Dendritic cell treated with granulocyte-macrophage colony-stimulating factor and Interleukin-4, amounts not matched to agents 40 ng/mL and 50 ng/mL, for 4 days (primary cell): ENCODE measurements at regions of chr17 and their contacts with region 1.

Region 1: GRCh38 chr17:28335201-28335955 is at the starts of genes IFT20 and TNFAIP1:
- H3K4me3 Mint-ChIP-seq: peak within 1 kb of the TSS; percentile 98
- H3K27ac Mint-ChIP-seq: peak within 1 kb of the TSS; percentile 76
- H3K4me1 Mint-ChIP-seq: peaks cover 54% of the 10 kb centered on the region
- H3K27me3 Mint-ChIP-seq: no peaks in the 10 kb centered on the region

Region 2: GRCh38 chr17:28086519-28086918 is 248.9 kb before region 1 on chr17:
- intact Hi-C with region 1: no loop called
- H3K4me3 Mint-ChIP-seq: no peak overlapping the region
- H3K27ac Mint-ChIP-seq: no peak overlapping the region
- H3K4me1 Mint-ChIP-seq: peaks cover 23% of the 10 kb centered on the region
- H3K27me3 Mint-ChIP-seq: no peaks in the 10 kb centered on the region

Region 3: GRCh38 chr17:28193241-28193640 is 142.1 kb before region 1 on chr17:
- intact Hi-C with region 1: no loop called
- H3K4me3 Mint-ChIP-seq: no peak overlapping the region
- H3K27ac Mint-ChIP-seq: peak overlapping the region; percentile 79
- H3K4me1 Mint-ChIP-seq: peaks cover 44% of the 10 kb centered on the region
- H3K27me3 Mint-ChIP-seq: no peaks in the 10 kb centered on the region

Region 4: DNA sequence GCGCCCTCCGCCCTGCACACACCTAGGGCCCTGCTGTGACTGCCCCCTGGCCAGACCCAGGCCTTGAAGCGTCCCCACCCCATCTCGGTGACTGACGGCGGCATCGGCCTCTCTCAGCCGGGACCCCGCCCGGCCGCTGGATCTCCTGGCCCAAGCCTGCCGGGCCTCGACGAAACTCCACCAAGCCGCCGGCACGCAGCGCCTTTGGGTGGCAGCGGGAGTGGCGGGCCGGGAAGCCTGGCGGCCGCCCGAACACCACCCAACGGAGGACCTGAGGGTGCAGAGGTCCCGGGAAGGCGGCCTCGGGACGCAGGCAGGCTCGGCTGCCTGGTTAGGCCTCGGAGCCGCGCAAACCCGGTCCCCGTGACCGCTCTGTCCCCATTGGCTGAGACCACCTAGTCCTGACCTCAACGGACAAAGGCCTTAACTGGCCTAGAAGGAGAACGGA is 28.4 kb before region 1 on chr17:
- intact Hi-C with region 1: no loop called
- H3K4me3 Mint-ChIP-seq: no peak overlapping the region
- H3K27ac Mint-ChIP-seq: no peak overlapping the region
- H3K4me1 Mint-ChIP-seq: no peaks in the 10 kb centered on the region
- H3K27me3 Mint-ChIP-seq: peaks cover 48% of the 10 kb centered on the region

Region 5: DNA sequence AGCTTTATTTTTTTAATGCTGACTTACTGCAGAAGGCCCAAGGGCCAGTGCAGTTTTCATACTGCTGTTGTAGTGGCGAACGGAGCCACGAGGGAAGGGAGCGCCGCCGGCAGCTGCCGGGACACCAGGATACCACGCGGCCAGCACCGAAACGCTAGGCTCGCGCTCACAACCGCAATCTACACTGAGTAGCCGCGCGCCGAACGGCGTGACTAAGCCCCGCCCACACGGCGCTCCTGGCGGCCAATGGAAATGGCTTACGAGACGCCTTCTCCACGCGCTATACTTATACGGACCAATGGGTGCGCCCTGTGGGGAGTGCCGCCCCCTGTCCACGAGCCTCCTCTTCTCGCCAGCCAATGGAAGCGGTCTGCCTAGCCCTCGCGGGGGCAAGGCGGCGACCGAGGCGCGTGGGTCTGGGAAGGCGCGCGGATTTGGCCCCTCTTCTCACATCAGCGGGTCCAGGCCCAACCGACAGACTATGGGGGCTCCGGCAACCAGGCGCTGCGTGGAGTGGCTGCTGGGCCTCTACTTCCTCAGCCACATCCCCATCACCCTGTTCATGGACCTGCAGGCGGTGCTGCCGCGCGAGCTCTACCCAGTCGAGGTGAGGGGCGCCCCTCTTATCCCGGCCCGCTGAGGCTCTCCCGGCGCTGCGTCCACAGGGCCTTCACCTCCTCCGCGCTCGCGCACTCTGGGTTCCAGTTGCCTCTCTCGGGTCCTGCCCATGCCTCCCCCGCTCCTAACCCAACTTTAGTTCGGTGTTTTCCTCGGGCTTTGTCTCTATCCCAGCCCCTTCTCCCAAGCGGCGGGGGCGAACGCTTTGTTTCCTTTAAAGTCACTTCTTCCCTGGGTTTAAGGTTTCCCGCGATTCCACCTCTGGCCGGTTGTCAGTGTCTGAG is 16.4 kb before region 1 on chr17 and contains the start of gene TMEM97:
- intact Hi-C with region 1: loop called (anchors 1 kb)
- H3K4me3 Mint-ChIP-seq: peak within 1 kb of the TSS; percentile 96
- H3K27ac Mint-ChIP-seq: peak within 1 kb of the TSS; percentile 83
- H3K4me1 Mint-ChIP-seq: peaks cover 22% of the 10 kb centered on the region
- H3K27me3 Mint-ChIP-seq: peaks cover 23% of the 10 kb centered on the region

Region 6: DNA sequence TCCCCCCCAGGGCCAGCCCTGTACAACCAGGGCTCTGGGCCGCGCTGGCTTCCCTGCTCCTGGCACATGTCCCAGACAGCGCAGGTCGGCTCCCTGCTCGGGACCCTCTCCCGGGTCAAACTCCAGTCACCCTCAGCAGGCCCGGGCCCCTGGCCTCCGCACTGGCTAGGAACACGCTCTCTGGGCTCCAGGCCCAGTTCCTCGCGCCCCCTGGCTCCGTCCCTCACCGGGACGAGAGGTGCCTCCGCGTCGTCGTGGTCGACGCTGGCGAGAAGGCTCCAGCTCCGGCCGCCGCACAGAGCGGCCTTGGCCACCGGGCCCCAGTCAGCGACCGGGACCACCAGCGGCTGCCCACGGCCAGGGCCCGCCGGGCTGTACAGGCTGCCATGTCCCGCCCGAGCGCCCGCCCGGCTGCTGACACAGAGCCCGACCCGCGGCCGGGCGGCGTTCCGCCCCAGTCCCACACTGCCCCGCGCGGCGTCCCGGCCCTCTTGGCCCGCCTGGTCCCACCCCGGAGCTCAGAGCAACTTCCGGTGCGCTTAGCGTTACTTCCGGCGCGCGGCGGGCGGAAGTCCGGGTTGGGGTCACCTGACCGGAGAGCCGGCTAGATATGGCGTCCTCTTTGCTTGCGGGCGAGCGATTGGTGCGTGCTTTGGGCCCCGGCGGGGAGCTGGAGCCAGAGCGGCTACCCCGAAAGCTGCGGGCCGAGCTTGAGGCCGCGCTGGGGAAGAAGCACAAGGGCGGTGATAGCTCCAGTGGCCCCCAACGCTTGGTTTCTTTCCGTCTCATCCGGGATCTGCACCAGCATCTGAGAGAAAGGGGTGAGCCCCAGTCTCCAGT is 21.9 kb after region 1 on chr17 and contains the start of gene POLDIP2:
- intact Hi-C with region 1: loop called (anchors 1 kb)
- H3K4me3 Mint-ChIP-seq: peak within 1 kb of the TSS; percentile 94
- H3K27ac Mint-ChIP-seq: peak within 1 kb of the TSS; percentile 95
- H3K4me1 Mint-ChIP-seq: peaks cover 21% of the 10 kb centered on the region
- H3K27me3 Mint-ChIP-seq: no peaks in the 10 kb centered on the region